ENCODE measurements at regions of chr17 and their contacts with region 1.

Region 1: DNA sequence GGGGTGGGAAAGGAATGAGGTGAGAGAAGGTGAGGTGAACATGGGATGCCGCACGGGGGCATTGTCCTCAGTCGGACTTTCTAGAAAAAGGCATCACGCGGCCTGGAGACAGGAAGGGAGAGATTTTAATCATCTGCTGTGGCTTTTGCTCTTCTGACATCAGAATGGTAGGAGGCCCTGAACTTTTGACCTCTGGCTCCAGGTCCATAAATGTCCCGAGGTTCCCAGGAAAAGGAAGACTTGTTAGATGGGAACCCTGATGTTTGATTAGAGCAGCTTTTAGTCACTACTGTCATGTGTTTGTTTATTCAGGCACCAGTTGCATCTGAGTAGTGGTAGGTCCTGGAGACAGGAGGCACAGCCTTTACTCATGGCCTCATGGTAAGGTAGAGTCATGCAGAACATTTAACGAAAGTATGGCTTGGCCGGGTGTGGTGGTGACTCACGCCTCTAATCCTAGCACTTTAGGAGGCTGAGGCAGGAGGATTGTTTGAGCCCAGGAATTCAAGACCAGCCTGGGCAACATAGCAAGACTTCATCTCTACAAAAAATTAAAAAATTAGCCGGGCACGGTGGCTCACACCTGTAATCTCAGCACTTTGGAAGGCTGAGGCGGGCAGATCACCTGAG is 203.1 kb downstream of the MSI2 start:
- DNase-seq: no peak
- H3K4me3 ChIP-seq: no peak overlapping the region
- H3K27ac ChIP-seq: peak overlapping the region in 1 of 2 experiments; percentile 23; a peak in 3 of 4 replicates
- H3K4me1 ChIP-seq: peaks cover 24 to 25% of the 10 kb centered on the region in 2 experiments; a peak in 3 of 4 replicates
- H3K27me3 ChIP-seq: no peaks in the 10 kb centered on the region
- CTCF ChIP-seq: no peak
- EP300 ChIP-seq: no peak
- RAD21 ChIP-seq: no peak

Region 2: DNA sequence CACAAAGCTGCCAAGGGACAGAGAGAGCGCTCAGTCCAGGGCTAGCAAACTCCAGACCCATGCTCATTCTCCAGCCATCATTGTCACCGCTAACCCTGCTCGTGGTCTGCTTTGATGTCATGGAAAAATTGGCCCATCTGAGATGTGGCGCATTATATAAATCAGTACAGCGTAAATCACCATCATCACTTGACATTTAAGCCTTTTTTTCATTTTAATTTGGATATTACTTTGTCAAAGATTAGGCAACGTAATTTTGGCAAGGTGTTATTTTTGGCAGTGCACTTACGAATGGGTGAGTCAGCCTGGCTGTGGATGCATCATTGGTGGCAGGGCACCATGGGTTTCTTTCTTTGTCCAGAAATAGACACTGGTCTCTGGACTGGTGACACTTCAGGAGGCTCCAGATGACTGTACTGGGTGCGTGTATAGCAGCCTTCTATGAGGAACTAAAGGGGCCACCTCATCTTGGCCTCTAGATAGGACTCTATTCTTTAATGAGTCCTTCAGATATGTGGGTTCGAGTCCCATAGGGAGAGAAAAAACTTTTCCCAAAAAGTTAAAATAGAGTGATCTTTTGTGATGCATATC is 36.7 kb before region 1 on chr17:
- CTCF ChIA-PET with region 1: no interaction called
- POLR2A ChIA-PET with region 1: no interaction called
- DNase-seq: no peak
- H3K4me3 ChIP-seq: no peak overlapping the region
- H3K27ac ChIP-seq: peak overlapping the region; percentile 11 to 84
- H3K4me1 ChIP-seq: peaks cover 37 to 74% of the 10 kb centered on the region in 2 experiments
- H3K27me3 ChIP-seq: no peaks in the 10 kb centered on the region
- CTCF ChIP-seq: no peak
- EP300 ChIP-seq: no peak
- RAD21 ChIP-seq: no peak

Region 3: GRCh38 chr17:57447990-57448758 is 11.2 kb before region 1 on chr17:
- CTCF ChIA-PET with region 1: interaction called, 15 read pairs
- POLR2A ChIA-PET with region 1: interaction called, 3 read pairs
- DNase-seq: no peak
- H3K4me3 ChIP-seq: no peak overlapping the region
- H3K27ac ChIP-seq: peak overlapping the region in 1 of 2 experiments; percentile 20; a peak in 1 of 4 replicates
- H3K4me1 ChIP-seq: peaks cover 12 to 54% of the 10 kb centered on the region in 2 experiments
- H3K27me3 ChIP-seq: no peaks in the 10 kb centered on the region
- CTCF ChIP-seq: no peak
- EP300 ChIP-seq: no peak
- RAD21 ChIP-seq: no peak

Measured in SK-N-SH (cell line).